ENCODE measurements at regions of chr10 and their contacts with region 1.

Region 1: GRCh38 chr10:102306710-102307109 is 61.4 kb downstream of the GBF1 start:
- DNase-seq: no peak
- H3K4me3 ChIP-seq: no peak overlapping the region
- H3K4me3 Mint-ChIP-seq: no peak overlapping the region
- H3K27ac ChIP-seq: no peak overlapping the region
- H3K27ac Mint-ChIP-seq: peak overlapping the region in 1 of 8 donors; percentile 11
- H3K4me1 ChIP-seq: no peaks in the 10 kb centered on the region
- H3K4me1 Mint-ChIP-seq: peaks cover 15 to 32% (median 31%) of the 10 kb centered on the region in 3 donors
- H3K27me3 ChIP-seq: no peaks in the 10 kb centered on the region
- H3K27me3 Mint-ChIP-seq: no peaks in the 10 kb centered on the region

Region 2: DNA sequence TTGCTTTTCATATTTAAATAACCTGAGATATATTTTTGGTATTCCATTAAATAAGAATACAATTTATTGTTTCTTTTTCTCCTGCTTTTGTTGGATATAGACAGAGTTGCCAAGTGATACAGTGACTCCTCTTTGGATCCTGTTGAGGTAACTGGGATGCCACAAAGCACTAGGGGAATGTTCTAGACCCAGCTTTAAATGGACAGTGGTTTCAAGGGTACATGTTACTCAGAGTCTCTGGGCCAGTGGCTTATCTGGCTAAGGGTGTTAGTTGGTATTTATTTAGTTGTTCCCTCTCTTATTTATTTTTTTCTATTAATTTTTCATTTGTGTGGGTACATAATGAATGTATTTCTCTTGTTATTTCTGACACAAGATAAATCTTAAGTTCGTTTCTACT is 52.3 kb before region 1 on chr10:
- CTCF ChIA-PET with region 1: no interaction called
- POLR2A ChIA-PET with region 1: no interaction called
- DNase-seq: no peak
- H3K4me3 ChIP-seq: no peak overlapping the region
- H3K4me3 Mint-ChIP-seq: no peak overlapping the region
- H3K27ac ChIP-seq: no peak overlapping the region
- H3K27ac Mint-ChIP-seq: no peak overlapping the region
- H3K4me1 ChIP-seq: peaks cover under 1% of the 10 kb centered on the region
- H3K4me1 Mint-ChIP-seq: peaks cover 25 to 50% (median 42%) of the 10 kb centered on the region in 3 donors
- H3K27me3 ChIP-seq: no peaks in the 10 kb centered on the region
- H3K27me3 Mint-ChIP-seq: no peaks in the 10 kb centered on the region

Region 3: GRCh38 chr10:102280397-102281101 is 26.2 kb before region 1 on chr10:
- CTCF ChIA-PET with region 1: no interaction called
- POLR2A ChIA-PET with region 1: interaction called, 11 read pairs
- DNase-seq: no peak
- H3K4me3 ChIP-seq: no peak overlapping the region
- H3K4me3 Mint-ChIP-seq: peak overlapping the region in 1 of 7 donors; percentile 11
- H3K27ac ChIP-seq: no peak overlapping the region
- H3K27ac Mint-ChIP-seq: peak overlapping the region in 5 of 8 donors; percentile 30 to 89 (median 70)
- H3K4me1 ChIP-seq: peaks cover 40% of the 10 kb centered on the region
- H3K4me1 Mint-ChIP-seq: peaks cover 36 to 65% (median 64%) of the 10 kb centered on the region in 3 donors
- H3K27me3 ChIP-seq: no peaks in the 10 kb centered on the region
- H3K27me3 Mint-ChIP-seq: no peaks in the 10 kb centered on the region

Measured in CD8-positive, alpha-beta memory T cell (primary cell).